ENCODE measurements at regions of chr17 and their contacts with region 1.

Region 1: GRCh38 chr17:43024407-43025289 is at the start of gene RND2:
- DNase-seq: peak; percentile 56 to 90 (median 81)
- ATAC-seq: peak; percentile 67
- H3K4me3 ChIP-seq: peak within 1 kb of the TSS; percentile 70 to 99
- H3K4me3 Mint-ChIP-seq: peak within 1 kb of the TSS; percentile 90
- H3K27ac ChIP-seq: peak within 1 kb of the TSS; percentile 1 to 72
- H3K27ac Mint-ChIP-seq: peak within 1 kb of the TSS; percentile 83
- H3K4me1 ChIP-seq: peaks cover 22% of the 10 kb centered on the region
- H3K4me1 Mint-ChIP-seq: peaks cover 26% of the 10 kb centered on the region
- H3K27me3 ChIP-seq: no peaks in the 10 kb centered on the region
- H3K27me3 Mint-ChIP-seq: no peaks in the 10 kb centered on the region
- CTCF ChIP-seq: peak; percentile 45
- total RNA-seq, gene RND2: 0.30 TPM in 1 of 2 experiments, not detected in the other

Region 2: GRCh38 chr17:42193969-42194899 is 830.4 kb before region 1 on chr17 and contains the start of gene GHDC:
- CTCF ChIA-PET with region 1: no interaction called
- POLR2A ChIA-PET with region 1: no interaction called
- intact Hi-C with region 1: loop called in 1 of 2 experiments (anchors 10 kb)
- DNase-seq: peak; percentile 50 to 86 (median 76)
- ATAC-seq: peak; percentile 98
- H3K4me3 ChIP-seq: peak within 1 kb of the TSS; percentile 79 to 93
- H3K4me3 Mint-ChIP-seq: peak within 1 kb of the TSS; percentile 95
- H3K27ac ChIP-seq: peak within 1 kb of the TSS; percentile 49 to 82
- H3K27ac Mint-ChIP-seq: peak within 1 kb of the TSS; percentile 88
- H3K4me1 ChIP-seq: peaks cover 22% of the 10 kb centered on the region
- H3K4me1 Mint-ChIP-seq: peaks cover 22% of the 10 kb centered on the region
- H3K27me3 ChIP-seq: no peaks in the 10 kb centered on the region
- H3K27me3 Mint-ChIP-seq: no peaks in the 10 kb centered on the region
- CTCF ChIP-seq: no peak
- total RNA-seq, gene GHDC: 6.6 to 6.7 TPM

Region 3: DNA sequence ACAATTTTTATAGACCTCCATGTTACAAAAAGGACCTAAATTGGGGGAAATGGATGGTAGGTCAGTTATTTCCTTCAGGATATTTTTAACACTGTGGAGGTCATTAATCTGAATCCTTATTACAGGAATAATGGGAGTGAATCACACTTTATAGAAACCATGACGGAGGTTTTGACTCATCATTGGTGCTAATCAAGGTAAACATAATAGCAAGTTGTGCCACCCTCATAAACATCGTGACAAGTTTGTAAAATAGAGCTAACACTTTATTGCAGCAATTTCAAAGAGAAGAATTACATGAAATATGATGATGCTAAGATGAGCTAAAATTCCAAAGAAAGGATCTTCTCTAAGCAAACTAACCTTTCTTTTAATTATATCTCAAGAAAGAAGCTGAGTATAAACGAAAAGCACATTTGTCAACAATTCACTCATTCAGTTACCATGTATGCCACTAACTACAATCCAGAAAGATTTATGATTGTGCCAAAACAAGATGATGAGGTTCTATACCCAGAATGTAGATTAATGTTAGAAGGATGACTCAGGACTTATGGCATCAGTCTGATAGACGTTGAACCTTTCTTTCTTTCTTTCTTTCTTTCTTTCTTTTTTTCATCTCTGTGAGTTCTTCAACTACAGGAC is 772.0 kb before region 1 on chr17:
- CTCF ChIA-PET with region 1: no interaction called
- POLR2A ChIA-PET with region 1: no interaction called
- intact Hi-C with region 1: no loop called
- DNase-seq: peak in 1 of 9 experiments; percentile 19
- ATAC-seq: no peak
- H3K4me3 ChIP-seq: no peak overlapping the region
- H3K4me3 Mint-ChIP-seq: no peak overlapping the region
- H3K27ac ChIP-seq: peak overlapping the region in 1 of 2 experiments; percentile 43
- H3K27ac Mint-ChIP-seq: peak overlapping the region; percentile 98
- H3K4me1 ChIP-seq: peaks cover 38% of the 10 kb centered on the region
- H3K4me1 Mint-ChIP-seq: peaks cover 70% of the 10 kb centered on the region
- H3K27me3 ChIP-seq: no peaks in the 10 kb centered on the region
- H3K27me3 Mint-ChIP-seq: no peaks in the 10 kb centered on the region
- CTCF ChIP-seq: no peak

Region 4: DNA sequence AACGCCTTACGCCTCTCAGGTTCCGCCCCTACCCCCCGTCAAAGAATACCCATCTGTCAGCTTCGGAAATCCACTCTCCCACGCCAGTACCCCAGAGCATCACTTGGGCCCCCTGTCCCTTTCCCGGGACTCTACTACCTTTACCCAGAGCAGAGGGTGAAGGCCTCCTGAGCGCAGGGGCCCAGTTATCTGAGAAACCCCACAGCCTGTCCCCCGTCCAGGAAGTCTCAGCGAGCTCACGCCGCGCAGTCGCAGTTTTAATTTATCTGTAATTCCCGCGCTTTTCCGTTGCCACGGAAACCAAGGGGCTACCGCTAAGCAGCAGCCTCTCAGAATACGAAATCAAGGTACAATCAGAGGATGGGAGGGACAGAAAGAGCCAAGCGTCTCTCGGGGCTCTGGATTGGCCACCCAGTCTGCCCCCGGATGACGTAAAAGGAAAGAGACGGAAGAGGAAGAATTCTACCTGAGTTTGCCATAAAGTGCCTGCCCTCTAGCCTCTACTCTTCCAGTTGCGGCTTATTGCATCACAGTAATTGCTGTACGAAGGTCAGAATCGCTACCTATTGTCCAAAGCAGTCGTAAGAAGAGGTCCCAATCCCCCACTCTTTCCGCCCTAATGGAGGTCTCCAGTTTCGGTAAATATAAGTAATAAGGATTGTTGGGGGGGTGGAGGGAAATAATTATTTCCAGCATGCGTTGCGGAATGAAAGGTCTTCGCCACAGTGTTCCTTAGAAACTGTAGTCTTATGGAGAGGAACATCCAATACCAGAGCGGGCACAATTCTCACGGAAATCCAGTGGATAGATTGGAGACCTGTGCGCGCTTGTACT is 100.7 kb after region 1 on chr17 and contains the start of gene BRCA1:
- CTCF ChIA-PET with region 1: no interaction called
- POLR2A ChIA-PET with region 1: no interaction called
- intact Hi-C with region 1: loop called (anchors 1 to 10 kb)
- DNase-seq: peak; percentile 86 to 99 (median 94)
- ATAC-seq: peak; percentile 99
- H3K4me3 ChIP-seq: peak within 1 kb of the TSS; percentile 63 to 74
- H3K4me3 Mint-ChIP-seq: peak within 1 kb of the TSS; percentile 94
- H3K27ac ChIP-seq: peak within 1 kb of the TSS; percentile 57 to 84
- H3K27ac Mint-ChIP-seq: peak within 1 kb of the TSS; percentile 92
- H3K4me1 ChIP-seq: peaks cover 15% of the 10 kb centered on the region
- H3K4me1 Mint-ChIP-seq: peaks cover 30% of the 10 kb centered on the region
- H3K27me3 ChIP-seq: no peaks in the 10 kb centered on the region
- H3K27me3 Mint-ChIP-seq: no peaks in the 10 kb centered on the region
- CTCF ChIP-seq: no peak
- total RNA-seq, gene BRCA1: 1.1 to 1.3 TPM

Region 5: GRCh38 chr17:43330876-43331639 is 306.4 kb after region 1 on chr17:
- CTCF ChIA-PET with region 1: interaction called, 8 read pairs
- POLR2A ChIA-PET with region 1: no interaction called
- intact Hi-C with region 1: loop called (anchors 5 kb)
- DNase-seq: no peak
- ATAC-seq: no peak
- H3K4me3 ChIP-seq: no peak overlapping the region
- H3K4me3 Mint-ChIP-seq: no peak overlapping the region
- H3K27ac ChIP-seq: no peak overlapping the region
- H3K27ac Mint-ChIP-seq: no peak overlapping the region
- H3K4me1 ChIP-seq: peaks cover 7% of the 10 kb centered on the region
- H3K4me1 Mint-ChIP-seq: peaks cover 7% of the 10 kb centered on the region
- H3K27me3 ChIP-seq: no peaks in the 10 kb centered on the region
- H3K27me3 Mint-ChIP-seq: peaks cover 15% of the 10 kb centered on the region
- CTCF ChIP-seq: no peak

Region 6: GRCh38 chr17:43360739-43361505 is 336.3 kb after region 1 on chr17:
- CTCF ChIA-PET with region 1: no interaction called
- POLR2A ChIA-PET with region 1: interaction called, 12 read pairs
- intact Hi-C with region 1: no loop called
- DNase-seq: peak; percentile 80 to 98 (median 94)
- ATAC-seq: peak; percentile 76
- H3K4me3 ChIP-seq: peak overlapping the region; percentile 60 to 64
- H3K4me3 Mint-ChIP-seq: peak overlapping the region; percentile 86
- H3K27ac ChIP-seq: peak overlapping the region; percentile 92 to 100
- H3K27ac Mint-ChIP-seq: peak overlapping the region; percentile 100
- H3K4me1 ChIP-seq: peaks cover 13% of the 10 kb centered on the region
- H3K4me1 Mint-ChIP-seq: peaks cover 35% of the 10 kb centered on the region
- H3K27me3 ChIP-seq: no peaks in the 10 kb centered on the region
- H3K27me3 Mint-ChIP-seq: no peaks in the 10 kb centered on the region
- CTCF ChIP-seq: no peak

Region 7: DNA sequence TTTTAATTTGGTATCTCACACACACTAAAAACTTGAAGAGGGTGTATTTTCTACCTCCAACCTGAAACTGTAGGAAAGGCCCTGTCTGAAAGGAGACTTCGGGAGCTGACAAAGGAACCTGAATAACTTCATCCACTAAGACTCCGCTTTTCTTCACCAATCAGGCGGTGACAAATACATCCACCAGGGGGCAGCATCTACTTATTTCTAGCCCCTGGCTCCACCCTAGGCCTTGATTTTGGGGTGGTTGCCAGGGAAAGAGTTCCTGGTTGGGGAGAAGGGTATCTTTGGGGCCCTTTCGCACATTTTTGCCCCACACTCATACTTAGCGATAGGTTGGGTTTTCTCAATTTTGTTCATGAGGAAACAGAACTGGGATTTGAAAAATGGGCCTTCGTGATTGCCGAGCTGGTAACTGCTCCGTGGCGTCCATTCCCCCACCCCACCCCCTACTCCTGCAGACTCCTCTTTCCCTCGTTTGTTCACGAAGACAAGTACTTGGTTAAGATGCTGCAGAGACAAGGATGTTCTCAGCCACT is 369.4 kb after region 1 on chr17:
- CTCF ChIA-PET with region 1: no interaction called
- POLR2A ChIA-PET with region 1: no interaction called
- intact Hi-C with region 1: loop called (anchors 2 to 10 kb)
- DNase-seq: peak; percentile 78 to 93 (median 88)
- ATAC-seq: peak; percentile 28
- H3K4me3 ChIP-seq: no peak overlapping the region
- H3K4me3 Mint-ChIP-seq: no peak overlapping the region
- H3K27ac ChIP-seq: no peak overlapping the region
- H3K27ac Mint-ChIP-seq: peak overlapping the region; percentile 11
- H3K4me1 ChIP-seq: peaks cover 21% of the 10 kb centered on the region
- H3K4me1 Mint-ChIP-seq: peaks cover 24% of the 10 kb centered on the region
- H3K27me3 ChIP-seq: no peaks in the 10 kb centered on the region
- H3K27me3 Mint-ChIP-seq: no peaks in the 10 kb centered on the region
- CTCF ChIP-seq: peak; percentile 88

Measured in CD8-positive, alpha-beta T cell (primary cell).